ENCODE measurements at regions of chr3 and their contacts with region 1.

Region 1: GRCh38 chr3:112136959-112137693 is 4.1 kb upstream of the GCSAM start:
- DNase-seq: peak; percentile 53
- H3K4me3 ChIP-seq: no peak overlapping the region
- H3K27ac ChIP-seq: no peak overlapping the region
- H3K4me1 ChIP-seq: peaks cover 9% of the 10 kb centered on the region
- H3K27me3 ChIP-seq: no peaks in the 10 kb centered on the region
- CTCF ChIP-seq: peak; percentile 77 to 79

Region 2: DNA sequence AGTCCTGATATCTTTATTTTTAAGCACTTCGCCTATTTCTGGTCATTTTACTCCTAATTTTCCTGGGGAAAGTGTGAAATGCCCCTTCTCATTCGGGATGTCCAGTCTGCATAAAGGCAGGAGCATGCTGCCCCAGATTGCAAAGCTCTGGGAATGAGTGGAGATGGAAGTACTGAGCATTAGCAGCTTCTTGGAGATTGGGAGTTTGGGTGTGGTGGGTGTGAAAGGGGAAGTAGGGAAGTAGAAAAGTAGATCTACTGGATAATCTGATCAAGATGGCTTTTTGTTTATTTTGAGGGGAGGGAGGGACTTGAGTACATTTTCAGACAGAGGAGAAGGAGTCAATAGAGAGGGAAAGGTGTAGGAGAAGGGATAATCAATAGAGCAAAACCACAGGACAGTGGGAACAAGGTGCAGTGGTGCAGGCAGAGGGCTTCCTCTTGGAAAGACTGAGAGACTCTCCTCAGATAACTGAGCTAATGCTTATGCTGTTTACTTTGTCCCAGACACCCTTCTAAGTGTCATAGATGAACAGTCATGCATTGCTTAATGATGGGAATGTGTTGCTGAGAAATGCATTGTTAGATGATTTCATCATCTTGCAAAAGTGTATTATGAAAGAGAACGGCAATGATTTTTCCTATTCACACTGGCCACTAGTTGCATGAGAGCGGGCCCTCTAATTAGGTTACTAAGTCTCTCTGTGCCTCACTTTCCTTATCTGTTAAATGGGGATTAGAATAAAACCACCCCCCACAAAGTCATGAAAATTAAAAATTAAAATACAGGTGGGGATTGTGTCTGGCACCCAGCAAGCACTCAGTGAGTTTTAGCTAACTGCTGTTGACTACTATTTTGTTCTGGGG is 232.5 kb before region 1 on chr3:
- CTCF ChIA-PET with region 1: no interaction called
- dilution Hi-C with region 1: no loop called
- in situ Hi-C with region 1: no loop called
- intact Hi-C with region 1: no loop called
- DNase-seq: peak; percentile 89
- H3K4me3 ChIP-seq: no peak overlapping the region
- H3K27ac ChIP-seq: peak overlapping the region; percentile 85
- H3K4me1 ChIP-seq: peaks cover 37% of the 10 kb centered on the region
- H3K27me3 ChIP-seq: no peaks in the 10 kb centered on the region
- CTCF ChIP-seq: peak; percentile 26 to 51

Region 3: DNA sequence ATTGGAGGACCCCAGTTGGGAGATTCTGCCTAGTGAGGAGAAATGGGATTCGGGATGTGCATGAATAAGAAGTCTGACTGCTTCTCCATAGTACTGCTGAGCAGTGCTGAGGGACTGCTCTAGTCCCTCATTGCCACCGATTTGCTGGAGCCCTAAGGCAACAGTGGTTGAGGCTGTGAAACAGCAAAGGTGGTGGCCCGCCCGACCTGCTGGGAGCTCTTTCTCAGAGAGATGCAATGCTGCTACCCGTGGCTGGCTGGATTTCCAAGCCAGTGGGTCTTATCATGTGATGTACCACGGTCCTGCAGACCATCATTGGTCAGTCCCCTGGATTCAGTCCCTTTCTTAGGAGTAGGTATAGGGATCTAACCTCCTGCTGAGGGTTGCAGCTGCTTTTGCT is 38.5 kb after region 1 on chr3:
- CTCF ChIA-PET with region 1: no interaction called
- dilution Hi-C with region 1: no loop called
- in situ Hi-C with region 1: no loop called
- intact Hi-C with region 1: loop called (anchors 2 kb)
- DNase-seq: no peak
- H3K4me3 ChIP-seq: no peak overlapping the region
- H3K27ac ChIP-seq: no peak overlapping the region
- H3K4me1 ChIP-seq: no peaks in the 10 kb centered on the region
- H3K27me3 ChIP-seq: no peaks in the 10 kb centered on the region
- CTCF ChIP-seq: no peak

Region 4: GRCh38 chr3:112327371-112327951 is 190.3 kb after region 1 on chr3:
- CTCF ChIA-PET with region 1: no interaction called
- dilution Hi-C with region 1: no loop called
- in situ Hi-C with region 1: no loop called
- intact Hi-C with region 1: loop called (anchors 1 kb)
- DNase-seq: peak; percentile 61
- H3K4me3 ChIP-seq: no peak overlapping the region
- H3K27ac ChIP-seq: no peak overlapping the region
- H3K4me1 ChIP-seq: no peaks in the 10 kb centered on the region
- H3K27me3 ChIP-seq: no peaks in the 10 kb centered on the region
- CTCF ChIP-seq: peak; percentile 72 to 76

Region 5: GRCh38 chr3:112519424-112520001 is 382.4 kb after region 1 on chr3:
- CTCF ChIA-PET with region 1: no interaction called
- dilution Hi-C with region 1: loop called (anchors 25 kb)
- in situ Hi-C with region 1: loop called (anchors 25 kb)
- intact Hi-C with region 1: loop called (anchors 1 kb)
- DNase-seq: peak; percentile 58
- H3K4me3 ChIP-seq: no peak overlapping the region
- H3K27ac ChIP-seq: no peak overlapping the region
- H3K4me1 ChIP-seq: no peaks in the 10 kb centered on the region
- H3K27me3 ChIP-seq: no peaks in the 10 kb centered on the region
- CTCF ChIP-seq: peak; percentile 74 to 76

Measured in mammary epithelial cell (primary cell).